Prostate gland (tissue), 2 donors: ENCODE measurements at regions of chr7 and their contacts with region 1.

Region 1: GRCh38 chr7:17523813-17524741 is 225.6 kb downstream of the AHR start:
- DNase-seq: peak; percentile 74
- H3K4me3 ChIP-seq: no peak overlapping the region
- H3K27ac ChIP-seq: no peak overlapping the region
- H3K4me1 ChIP-seq: no peaks in the 10 kb centered on the region
- H3K27me3 ChIP-seq: no peaks in the 10 kb centered on the region
- CTCF ChIP-seq: no peak
- POLR2A ChIP-seq: no peak

Region 2: DNA sequence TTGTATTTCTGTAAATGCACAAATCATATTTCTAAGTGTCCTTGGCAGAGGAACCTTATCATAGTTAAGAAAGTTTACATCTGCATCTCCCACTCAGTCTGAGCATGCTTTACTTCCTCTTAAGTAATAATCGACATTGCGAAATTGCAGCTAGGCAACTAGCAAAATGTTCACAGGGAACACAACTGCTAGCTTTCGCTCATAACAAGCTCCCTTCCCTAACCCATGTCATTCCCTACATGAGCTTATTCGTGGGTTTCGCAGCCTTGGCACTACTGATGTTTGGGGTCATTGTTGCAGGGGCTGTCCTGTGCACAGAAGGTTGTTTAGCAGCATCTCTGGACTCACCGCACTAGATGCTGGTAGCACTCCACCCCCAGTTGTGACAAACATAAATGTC is 154.0 kb before region 1 on chr7:
- intact Hi-C with region 1: loop called (anchors 10 kb)
- DNase-seq: peak; percentile 10
- H3K4me3 ChIP-seq: no peak overlapping the region
- H3K27ac ChIP-seq: no peak overlapping the region
- H3K4me1 ChIP-seq: no peaks in the 10 kb centered on the region
- H3K27me3 ChIP-seq: no peaks in the 10 kb centered on the region
- CTCF ChIP-seq: no peak
- POLR2A ChIP-seq: no peak